ENCODE measurements at regions of chr5 and their contacts with region 1.

Region 1: DNA sequence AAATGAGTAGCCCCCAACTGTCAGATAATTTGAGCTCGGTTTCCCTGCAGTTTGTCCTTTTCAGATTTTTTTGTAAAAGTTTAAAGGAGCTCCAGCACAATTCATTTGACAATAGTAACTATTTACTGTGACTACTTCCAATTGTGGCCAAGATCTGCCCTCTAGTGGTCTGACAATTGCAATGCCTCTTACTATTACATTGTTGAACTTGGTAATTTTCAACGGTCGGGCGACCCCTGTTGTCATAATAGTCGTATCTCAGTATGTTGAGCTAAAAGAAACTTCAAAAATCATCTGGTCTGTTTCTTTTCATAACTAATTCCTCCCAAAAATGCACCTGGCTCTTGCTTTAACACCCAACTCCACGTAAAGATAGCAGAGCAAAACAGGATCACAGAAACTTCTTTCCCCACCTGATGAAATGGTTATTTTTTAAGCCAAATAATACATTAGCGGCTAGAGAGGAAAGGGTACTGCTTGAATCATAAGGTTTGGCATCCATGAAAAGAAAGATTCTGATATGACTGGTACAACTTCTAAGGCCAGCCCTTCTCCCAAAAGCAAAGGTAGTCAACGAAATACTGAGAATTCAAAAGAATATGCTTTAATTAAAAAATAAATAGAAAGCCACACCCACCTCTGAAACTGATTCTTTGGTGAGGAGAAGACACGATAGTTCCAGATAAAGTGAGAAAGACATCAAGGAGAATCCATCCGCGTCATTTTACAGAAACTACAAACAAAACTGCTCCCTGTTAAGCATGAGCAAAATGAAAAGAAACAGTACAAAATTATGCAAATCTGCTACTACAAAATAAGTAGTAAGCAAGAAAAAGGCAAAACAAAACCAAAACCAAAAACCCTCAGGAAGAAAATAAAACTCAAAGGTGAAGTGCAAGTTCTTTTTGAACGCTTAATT is 76.9 kb upstream of the HTR4 start:
- DNase-seq: peak; percentile 83 to 93 (median 88)
- H3K4me3 ChIP-seq: peak overlapping the region in 1 of 4 donors; percentile 23
- H3K27ac ChIP-seq: peak overlapping the region in 2 of 5 donors; percentile 49 to 67
- H3K4me1 ChIP-seq: no peaks in the 10 kb centered on the region
- H3K27me3 ChIP-seq: no peaks in the 10 kb centered on the region
- CTCF ChIP-seq: peak; percentile 85 to 99 (median 98)
- POLR2A ChIP-seq: no peak

Region 2: DNA sequence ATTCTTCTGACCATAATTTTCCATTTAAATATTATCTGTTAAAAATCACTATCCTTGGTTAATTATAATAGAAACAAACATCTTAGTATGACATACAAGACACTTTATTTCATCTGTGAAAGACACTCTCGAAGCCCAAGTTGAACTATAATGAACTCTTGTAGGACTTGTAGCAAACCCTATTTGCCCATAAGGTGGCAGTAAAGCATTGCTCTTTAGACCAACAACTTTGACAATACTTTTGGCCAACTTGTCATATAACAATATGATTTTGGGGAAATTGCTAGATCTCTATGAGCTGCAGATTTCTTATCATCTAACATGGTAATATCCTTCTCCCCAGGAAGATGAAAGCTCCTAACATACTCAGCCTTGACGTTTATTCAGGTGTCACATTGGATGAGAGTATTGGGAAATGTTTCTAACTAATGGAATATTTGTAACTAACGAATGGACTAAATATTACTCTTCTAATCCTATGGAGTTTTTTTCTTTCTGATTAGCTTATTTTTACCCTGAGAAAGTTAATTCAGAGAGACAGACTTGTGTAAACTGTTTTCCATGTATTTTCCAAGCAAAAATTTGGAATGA is 551.9 kb before region 1 on chr5:
- intact Hi-C with region 1: loop called (anchors 10 kb)
- DNase-seq: peak in 4 of 7 donors; percentile 13 to 19 (median 17)
- H3K4me3 ChIP-seq: no peak overlapping the region
- H3K27ac ChIP-seq: no peak overlapping the region
- H3K4me1 ChIP-seq: no peaks in the 10 kb centered on the region
- H3K27me3 ChIP-seq: peaks cover 14% of the 10 kb centered on the region
- CTCF ChIP-seq: peak; percentile 46 to 89 (median 76)
- POLR2A ChIP-seq: no peak

Region 3: DNA sequence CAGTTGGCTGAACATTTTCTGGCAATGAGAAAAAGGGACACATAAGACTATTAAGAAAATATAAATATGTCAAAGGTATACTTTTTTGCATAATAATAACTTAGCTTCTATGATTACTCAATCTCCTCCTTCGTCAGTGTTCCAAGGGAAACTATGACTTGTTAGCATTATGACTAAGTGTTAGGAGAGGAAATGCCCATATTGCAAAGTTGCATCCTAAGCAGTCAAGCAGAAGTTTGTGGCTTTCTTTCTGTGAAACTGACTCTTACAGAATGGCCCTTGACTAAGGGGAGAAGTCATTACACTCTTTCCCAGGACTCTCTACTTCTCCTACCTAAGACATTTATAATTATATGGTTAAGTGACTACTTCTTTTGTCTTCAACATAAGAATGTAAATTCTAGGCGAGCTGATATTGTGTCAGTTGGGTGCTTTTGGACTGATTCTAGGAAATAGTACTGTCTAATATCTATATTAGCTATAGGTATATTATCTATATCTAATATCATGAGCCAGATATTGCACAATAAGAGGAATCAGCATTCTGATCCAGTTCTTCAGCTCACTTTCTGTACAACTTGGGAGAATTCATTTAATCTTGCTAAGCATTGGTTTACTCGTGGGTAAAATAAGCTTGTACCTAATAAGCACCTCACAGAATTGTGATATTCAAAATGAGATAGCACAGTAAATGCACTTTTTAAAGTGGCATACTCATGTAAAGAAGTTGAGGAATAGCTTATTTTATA is 544.8 kb before region 1 on chr5:
- intact Hi-C with region 1: loop called in 1 of 2 experiments (anchors 10 kb)
- DNase-seq: peak in 1 of 7 donors; percentile 18
- H3K4me3 ChIP-seq: no peak overlapping the region
- H3K27ac ChIP-seq: peak overlapping the region in 2 of 5 donors; percentile 37 to 61
- H3K4me1 ChIP-seq: no peaks in the 10 kb centered on the region
- H3K27me3 ChIP-seq: peaks cover 14% of the 10 kb centered on the region
- CTCF ChIP-seq: no peak
- POLR2A ChIP-seq: no peak

Region 4: GRCh38 chr5:148443998-148444397 is 287.2 kb before region 1 on chr5:
- intact Hi-C with region 1: loop called (anchors 5 kb)
- DNase-seq: peak in 6 of 7 donors; percentile 61 to 76 (median 64)
- H3K4me3 ChIP-seq: no peak overlapping the region
- H3K27ac ChIP-seq: peak overlapping the region in 1 of 5 donors; percentile 6
- H3K4me1 ChIP-seq: peaks cover 0 to 3% of the 10 kb centered on the region in 2 donors
- H3K27me3 ChIP-seq: no peaks in the 10 kb centered on the region
- CTCF ChIP-seq: peak; percentile 69 to 88 (median 83)
- POLR2A ChIP-seq: no peak

Region 5: GRCh38 chr5:149002053-149002452 is 270.9 kb after region 1 on chr5:
- intact Hi-C with region 1: loop called in 1 of 2 experiments (anchors 10 kb)
- DNase-seq: peak in 1 of 7 donors; percentile 4
- H3K4me3 ChIP-seq: no peak overlapping the region
- H3K27ac ChIP-seq: no peak overlapping the region
- H3K4me1 ChIP-seq: no peaks in the 10 kb centered on the region
- H3K27me3 ChIP-seq: no peaks in the 10 kb centered on the region
- CTCF ChIP-seq: no peak
- POLR2A ChIP-seq: no peak

Region 6: DNA sequence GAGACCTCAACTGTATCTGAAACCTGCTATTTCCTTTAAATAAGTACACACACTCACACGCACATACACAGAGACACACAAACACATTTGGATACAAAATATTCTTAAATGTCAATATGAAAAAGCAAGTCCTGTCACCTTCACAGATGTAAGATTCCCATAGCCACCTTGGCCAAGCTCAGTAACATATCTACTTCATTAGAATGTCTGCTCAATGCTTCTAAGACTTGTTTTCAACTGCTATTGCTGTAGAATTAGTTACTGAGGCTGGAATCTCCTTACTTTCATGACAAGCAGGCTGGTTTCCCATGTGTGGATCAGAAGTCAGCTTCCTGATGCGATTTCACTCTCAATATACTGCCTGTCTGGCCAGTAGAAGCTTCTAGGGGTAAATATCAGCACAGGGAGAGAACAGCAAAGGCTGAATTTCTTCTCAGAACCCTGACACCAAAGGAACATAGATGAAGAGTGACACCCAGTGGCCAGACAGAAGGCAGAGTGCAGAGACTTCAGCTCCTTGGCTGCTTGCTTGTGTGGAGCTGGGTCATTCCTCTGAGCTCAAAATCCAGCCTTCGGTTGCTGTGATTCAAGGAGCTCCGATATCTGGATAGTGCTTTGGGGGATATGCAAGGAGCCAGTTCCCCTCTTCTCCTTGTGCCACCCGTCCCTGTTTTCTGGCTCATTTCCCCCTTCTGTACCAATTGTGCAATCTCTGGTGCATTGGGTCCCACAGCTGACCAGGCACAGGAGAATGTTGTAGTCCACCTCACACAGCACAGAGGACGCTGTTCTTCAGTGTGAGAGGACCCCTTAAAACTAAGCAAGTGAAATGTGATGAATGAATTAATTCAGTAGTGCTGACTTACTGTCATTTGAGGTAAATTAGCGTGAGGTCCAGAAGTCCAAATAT is 383.5 kb after region 1 on chr5:
- intact Hi-C with region 1: loop called (anchors 5 to 10 kb)
- DNase-seq: peak; percentile 58 to 84 (median 66)
- H3K4me3 ChIP-seq: no peak overlapping the region
- H3K27ac ChIP-seq: no peak overlapping the region
- H3K4me1 ChIP-seq: no peaks in the 10 kb centered on the region
- H3K27me3 ChIP-seq: no peaks in the 10 kb centered on the region
- CTCF ChIP-seq: peak; percentile 45 to 77 (median 69)
- POLR2A ChIP-seq: no peak